ENCODE measurements at regions of chr16 and their contacts with region 1.

Region 1: DNA sequence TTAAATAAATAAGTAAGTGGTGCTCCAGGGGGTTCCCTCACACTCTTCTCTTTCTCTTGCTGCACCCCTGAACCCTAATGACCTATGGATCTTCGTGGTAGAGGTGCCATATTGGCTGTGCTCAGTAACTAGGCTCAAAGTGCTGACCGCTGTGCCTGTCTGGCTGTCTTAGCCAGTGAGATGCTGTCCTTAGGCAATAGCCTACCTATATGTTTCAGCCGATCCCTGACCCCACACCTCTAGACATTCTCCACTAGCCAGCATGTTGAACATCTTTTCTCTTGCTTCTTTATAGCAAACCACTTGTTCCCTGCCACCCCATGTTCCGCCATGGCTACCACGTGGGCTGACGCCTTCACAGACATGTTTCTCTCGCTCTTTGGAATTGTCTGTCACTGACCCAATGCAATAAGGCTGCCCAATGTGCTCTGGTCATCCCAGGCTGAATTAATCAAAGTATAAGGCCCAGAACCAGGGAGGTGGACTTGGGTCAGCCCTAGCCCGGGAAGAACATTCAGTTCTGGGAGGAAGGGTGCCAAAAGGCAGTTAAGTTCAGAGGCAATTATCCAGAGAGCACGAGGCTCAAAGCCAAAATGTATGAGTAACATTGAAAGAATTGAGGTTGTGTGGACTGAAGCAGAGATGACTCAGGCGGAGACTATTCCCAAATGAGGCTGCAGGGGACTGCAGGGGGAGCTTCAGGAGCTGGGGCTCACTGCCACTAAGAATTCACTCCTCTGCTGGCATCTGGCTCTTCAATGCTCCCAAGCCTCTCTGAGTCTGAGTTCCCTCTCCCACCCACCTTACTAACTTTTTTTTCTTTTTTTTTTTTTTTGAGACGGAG is 28.7 kb upstream of the TNRC6A start:
- DNase-seq: peak; percentile 65 to 94
- H3K4me3 ChIP-seq: no peak overlapping the region
- H3K27ac ChIP-seq: peak overlapping the region; percentile 82 to 90
- H3K4me1 ChIP-seq: peaks cover 12 to 24% of the 10 kb centered on the region in 2 donors
- H3K27me3 ChIP-seq: no peaks in the 10 kb centered on the region
- CTCF ChIP-seq: peak; percentile 10 to 33 (median 27)

Region 2: DNA sequence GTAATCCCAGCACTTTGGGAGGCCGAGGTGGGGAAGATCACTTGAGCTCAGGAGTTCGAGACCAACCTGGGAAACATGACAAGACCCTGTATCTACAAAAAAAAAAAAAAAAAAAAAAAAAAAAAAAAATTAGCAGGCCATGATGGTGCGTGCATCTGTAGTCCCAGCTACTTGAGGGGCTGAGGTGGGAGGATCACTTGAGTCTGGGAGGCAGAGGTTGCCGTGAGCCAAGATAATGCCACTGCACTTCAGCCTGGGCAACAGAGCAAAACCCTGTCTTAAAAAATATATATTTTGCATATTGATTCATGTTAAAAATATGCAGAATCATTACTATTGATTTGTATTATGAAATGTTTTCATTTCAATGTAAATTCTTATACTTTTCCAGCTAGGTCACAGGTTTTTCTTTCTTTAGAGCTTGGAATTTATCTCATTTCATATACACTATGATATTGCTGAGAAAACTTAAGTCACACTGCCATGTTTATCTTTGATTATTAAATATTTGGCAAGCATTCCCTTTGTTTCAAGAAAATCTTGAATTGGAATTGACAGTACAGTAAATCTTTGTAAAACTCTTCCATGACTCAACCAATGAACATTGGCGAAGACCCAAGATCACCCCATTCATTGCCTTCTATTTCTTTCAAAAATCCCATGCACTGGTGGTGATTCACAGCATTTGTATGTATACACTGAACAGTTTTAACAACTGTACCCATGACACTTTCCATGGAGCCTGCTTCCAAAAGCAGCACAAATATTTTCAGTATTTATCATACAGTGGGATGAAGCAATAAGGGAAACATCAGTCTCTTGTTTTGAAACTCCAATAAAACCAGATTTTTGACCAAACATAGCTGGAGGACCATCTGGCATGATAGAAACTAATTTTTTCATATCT is 54.8 kb before region 1 on chr16:
- intact Hi-C with region 1: loop called (anchors 2 kb)
- DNase-seq: peak in 1 of 2 donors; percentile 86
- H3K4me3 ChIP-seq: no peak overlapping the region
- H3K27ac ChIP-seq: peak overlapping the region; percentile 30 to 60
- H3K4me1 ChIP-seq: peaks cover 0 to 10% of the 10 kb centered on the region in 2 donors
- H3K27me3 ChIP-seq: no peaks in the 10 kb centered on the region
- CTCF ChIP-seq: no peak

Region 3: GRCh38 chr16:24721830-24722238 is 21.1 kb after region 1 on chr16:
- intact Hi-C with region 1: loop called (anchors 2 kb)
- DNase-seq: no peak
- H3K4me3 ChIP-seq: no peak overlapping the region
- H3K27ac ChIP-seq: peak overlapping the region; percentile 58 to 73
- H3K4me1 ChIP-seq: peaks cover 3 to 33% of the 10 kb centered on the region in 2 donors
- H3K27me3 ChIP-seq: no peaks in the 10 kb centered on the region
- CTCF ChIP-seq: no peak

Region 4: GRCh38 chr16:24776501-24777220 is 75.9 kb after region 1 on chr16:
- intact Hi-C with region 1: loop called (anchors 5 kb)
- DNase-seq: no peak
- H3K4me3 ChIP-seq: peak overlapping the region in 1 of 2 donors; percentile 25
- H3K27ac ChIP-seq: peak overlapping the region; percentile 64 to 73
- H3K4me1 ChIP-seq: peaks cover 13 to 39% of the 10 kb centered on the region in 2 donors
- H3K27me3 ChIP-seq: no peaks in the 10 kb centered on the region
- CTCF ChIP-seq: no peak

Measured in ascending aorta (tissue), 2 donors.